Activated naive CD4-positive, alpha-beta T cell treated with anti-CD3 and anti-CD28 coated beads for 36 hours (primary cell): ENCODE measurements at regions of chr6 and their contacts with region 1.

Region 1: DNA sequence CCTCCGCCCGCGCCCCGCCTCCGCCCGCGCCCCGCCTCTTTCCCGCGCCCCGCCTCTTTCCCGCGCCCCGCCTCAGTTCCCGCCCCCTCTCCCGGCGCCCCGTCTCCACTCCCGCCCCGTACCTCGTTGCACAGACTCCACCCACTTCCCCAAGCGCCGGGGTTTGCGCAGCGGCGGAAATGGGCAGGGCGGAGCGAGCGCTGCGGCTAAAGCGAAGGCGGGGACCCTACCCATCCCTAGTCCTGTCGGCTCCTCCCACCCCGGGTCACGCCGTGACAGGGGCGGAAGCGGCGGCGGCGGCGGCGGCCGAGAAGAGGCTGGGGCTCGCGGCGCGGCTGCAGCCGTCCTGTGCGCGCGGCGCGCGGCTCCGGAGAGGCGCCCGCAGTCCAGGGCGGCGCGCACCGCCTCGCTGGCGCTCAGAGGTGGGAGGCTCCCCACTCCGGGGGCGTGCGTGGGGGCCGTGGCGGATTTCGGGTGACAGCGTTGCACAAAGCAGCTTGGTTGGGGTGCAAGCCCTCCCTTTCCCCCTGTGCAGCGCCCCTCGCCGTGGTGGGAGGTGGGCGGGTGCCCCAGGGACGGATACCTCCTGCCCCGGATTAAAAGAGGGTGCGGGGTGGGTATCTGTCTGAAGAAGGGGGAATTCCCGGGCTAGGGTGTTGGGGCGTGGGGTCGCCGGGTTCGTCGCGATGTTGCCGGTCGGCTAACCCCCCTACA is at the start of gene KDM1B:
- DNase-seq: peak; percentile 98
- H3K4me3 Mint-ChIP-seq: peak within 1 kb of the TSS; percentile 97
- H3K27ac Mint-ChIP-seq: peak within 1 kb of the TSS; percentile 88
- H3K4me1 Mint-ChIP-seq: peaks cover 22% of the 10 kb centered on the region
- H3K27me3 Mint-ChIP-seq: no peaks in the 10 kb centered on the region
- total RNA-seq, gene KDM1B: 14.4 to 15.2 TPM

Region 2: DNA sequence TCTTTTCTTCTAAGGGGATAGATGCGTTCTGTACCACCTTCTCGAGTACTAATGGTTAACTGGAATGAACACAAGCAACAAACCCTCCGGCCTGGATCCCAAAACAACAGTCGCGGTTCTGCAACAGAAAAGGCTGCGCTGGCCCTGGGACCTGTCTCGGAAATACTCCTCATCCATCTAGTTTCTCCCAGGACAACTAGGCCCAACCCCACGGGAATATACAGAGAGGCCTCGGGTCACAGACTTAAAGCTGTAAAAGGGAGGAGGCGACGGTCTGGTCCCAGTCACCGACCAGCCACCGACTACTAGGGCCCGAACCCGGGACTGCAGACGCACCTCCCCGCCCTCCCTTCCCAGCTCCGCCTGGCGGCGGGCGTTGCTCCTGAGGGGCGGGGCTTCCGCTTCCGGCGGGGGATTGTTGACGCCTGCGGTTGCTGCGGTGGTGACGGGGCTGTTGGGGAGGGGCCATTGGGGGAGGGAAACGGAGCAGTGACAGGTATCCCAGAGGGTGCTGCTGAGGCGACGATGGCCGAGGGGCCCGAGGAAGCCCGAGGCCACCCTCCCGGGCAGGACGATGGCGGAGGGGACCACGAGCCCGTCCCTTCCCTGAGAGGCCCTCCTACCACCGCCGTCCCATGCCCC is 555.3 kb before region 1 on chr6 and contains the start of gene FAM8A1:
- CTCF ChIA-PET with region 1: no interaction called
- intact Hi-C with region 1: loop called (anchors 1 kb)
- DNase-seq: peak; percentile 98
- H3K4me3 Mint-ChIP-seq: peak within 1 kb of the TSS; percentile 75
- H3K27ac Mint-ChIP-seq: peak within 1 kb of the TSS; percentile 53
- H3K4me1 Mint-ChIP-seq: peaks cover 29% of the 10 kb centered on the region
- H3K27me3 Mint-ChIP-seq: no peaks in the 10 kb centered on the region
- total RNA-seq, gene FAM8A1: 2.9 to 3.0 TPM

Region 3: GRCh38 chr6:18242062-18242851 is 87.0 kb after region 1 on chr6:
- CTCF ChIA-PET with region 1: no interaction called
- intact Hi-C with region 1: loop called (anchors 2 kb)
- DNase-seq: no peak
- H3K4me3 Mint-ChIP-seq: peak overlapping the region; percentile 42
- H3K27ac Mint-ChIP-seq: no peak overlapping the region
- H3K4me1 Mint-ChIP-seq: peaks cover 50% of the 10 kb centered on the region
- H3K27me3 Mint-ChIP-seq: no peaks in the 10 kb centered on the region

Region 4: GRCh38 chr6:18400831-18401446 is 245.6 kb after region 1 on chr6:
- CTCF ChIA-PET with region 1: no interaction called
- intact Hi-C with region 1: loop called (anchors 5 kb)
- DNase-seq: no peak
- H3K4me3 Mint-ChIP-seq: no peak overlapping the region
- H3K27ac Mint-ChIP-seq: peak overlapping the region; percentile 59
- H3K4me1 Mint-ChIP-seq: peaks cover 15% of the 10 kb centered on the region
- H3K27me3 Mint-ChIP-seq: no peaks in the 10 kb centered on the region